Naive thymus-derived CD4-positive, alpha-beta T cell (primary cell): ENCODE measurements at regions of chr3 and their contacts with region 1.

Region 1: DNA sequence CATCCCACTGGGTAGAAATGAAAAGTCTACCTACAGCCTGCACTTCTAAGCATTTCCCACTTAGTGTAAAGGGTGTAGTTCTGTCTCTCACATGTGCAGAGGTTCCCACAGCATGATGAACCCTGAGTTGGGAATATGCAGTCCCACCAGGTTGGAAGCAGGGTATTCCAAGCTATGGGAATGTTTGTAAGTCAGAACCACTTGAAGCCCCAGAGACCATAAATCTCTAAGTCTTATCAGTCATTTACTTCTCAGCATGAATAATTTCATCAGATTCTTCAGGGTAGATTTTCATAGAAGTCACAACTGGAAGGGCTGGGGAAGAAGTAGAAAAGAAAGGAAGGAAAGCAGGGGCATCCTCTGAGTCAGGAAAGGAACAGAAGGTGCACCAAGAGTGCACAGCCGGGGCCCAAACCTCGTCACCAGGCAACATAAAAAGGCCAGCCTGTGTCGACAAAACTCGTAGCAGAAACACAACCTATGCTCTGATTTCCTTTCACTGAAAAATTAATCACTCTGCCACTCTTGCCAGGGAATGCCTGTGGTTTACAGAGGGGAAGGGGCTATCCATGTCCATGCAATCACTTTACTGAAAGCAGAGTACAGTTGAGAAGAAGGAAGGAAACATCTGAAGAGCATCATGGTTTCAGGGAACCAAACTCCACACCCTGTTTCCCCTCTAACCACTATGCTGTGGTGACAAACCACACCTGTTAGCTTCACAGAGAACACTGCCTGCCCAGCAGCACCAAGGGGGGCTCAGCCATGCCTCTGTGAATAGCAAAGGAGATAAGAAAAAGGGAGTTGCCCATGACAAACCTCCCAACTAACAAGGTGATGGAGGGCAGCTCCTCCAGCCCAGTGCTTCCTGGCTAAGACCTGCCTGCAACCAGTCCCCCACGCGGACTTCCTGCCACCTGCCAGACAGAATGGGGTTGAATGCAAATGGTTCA is 40.5 kb downstream of the SH3BP5 start:
- DNase-seq: peak in 8 of 9 donors; percentile 61 to 78 (median 68)
- ATAC-seq: peak; percentile 84
- H3K4me3 ChIP-seq: peak overlapping the region; percentile 28
- H3K4me3 Mint-ChIP-seq: peak overlapping the region; percentile 74 to 86 (median 80)
- H3K27ac ChIP-seq: peak overlapping the region; percentile 23
- H3K27ac Mint-ChIP-seq: peak overlapping the region; percentile 77 to 97 (median 94)
- H3K4me1 ChIP-seq: peaks cover 58 to 62% of the 10 kb centered on the region in 2 donors
- H3K4me1 Mint-ChIP-seq: peaks cover 64 to 96% (median 85%) of the 10 kb centered on the region in 7 donors
- H3K27me3 ChIP-seq: no peaks in the 10 kb centered on the region
- H3K27me3 Mint-ChIP-seq: no peaks in the 10 kb centered on the region

Region 2: DNA sequence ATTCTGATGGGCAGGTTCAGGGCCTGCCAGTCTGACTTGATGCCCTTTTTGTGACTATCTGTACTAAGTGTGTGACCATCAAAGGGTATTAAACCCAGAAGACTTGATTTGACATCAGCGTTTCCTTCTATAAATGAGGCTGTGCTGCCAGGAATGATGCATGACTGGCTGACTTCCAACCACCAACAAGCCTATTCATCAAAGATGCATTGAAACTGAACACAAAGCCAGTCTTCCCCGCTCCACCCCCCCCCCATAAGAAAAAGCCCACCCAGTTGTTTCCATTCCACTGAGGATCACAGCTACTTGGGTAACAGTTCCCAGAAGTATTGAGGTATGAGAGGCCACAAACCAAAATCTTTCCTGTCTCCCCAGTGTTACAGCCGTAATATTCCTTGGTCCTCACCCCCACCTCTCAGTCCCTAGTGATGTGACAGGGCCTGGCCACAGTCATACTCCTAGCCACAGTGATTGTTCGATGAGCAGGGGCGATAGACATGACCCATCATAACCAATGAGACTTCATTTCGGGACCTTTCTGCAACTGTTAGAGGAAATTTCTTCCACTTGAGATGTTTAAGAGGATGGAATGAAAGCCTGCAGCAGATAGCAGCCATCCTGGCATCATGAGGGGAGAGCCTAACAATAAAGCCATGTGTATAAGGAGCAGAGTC is 17.9 kb after region 1 on chr3:
- CTCF ChIA-PET with region 1: interaction called, 3 read pairs
- POLR2A ChIA-PET with region 1: interaction called, 5 read pairs
- intact Hi-C with region 1: loop called (anchors 1 to 2 kb)
- DNase-seq: no peak
- ATAC-seq: no peak
- H3K4me3 ChIP-seq: no peak overlapping the region
- H3K4me3 Mint-ChIP-seq: peak overlapping the region in 6 of 10 donors; percentile 17 to 69 (median 46)
- H3K27ac ChIP-seq: no peak overlapping the region
- H3K27ac Mint-ChIP-seq: peak overlapping the region in 8 of 9 donors; percentile 23 to 89 (median 66)
- H3K4me1 ChIP-seq: peaks cover 44 to 52% of the 10 kb centered on the region in 2 donors
- H3K4me1 Mint-ChIP-seq: peaks cover 36 to 72% (median 63%) of the 10 kb centered on the region in 7 donors
- H3K27me3 ChIP-seq: no peaks in the 10 kb centered on the region
- H3K27me3 Mint-ChIP-seq: no peaks in the 10 kb centered on the region

Region 3: GRCh38 chr3:15325242-15325641 is 33.4 kb after region 1 on chr3:
- CTCF ChIA-PET with region 1: no interaction called
- POLR2A ChIA-PET with region 1: interaction called, 7 read pairs
- intact Hi-C with region 1: loop called in 1 of 2 experiments (anchors 1 kb)
- DNase-seq: no peak
- ATAC-seq: no peak
- H3K4me3 ChIP-seq: no peak overlapping the region
- H3K4me3 Mint-ChIP-seq: peak overlapping the region in 3 of 10 donors; percentile 34 to 55 (median 40)
- H3K27ac ChIP-seq: no peak overlapping the region
- H3K27ac Mint-ChIP-seq: peak overlapping the region in 7 of 9 donors; percentile 41 to 87 (median 56)
- H3K4me1 ChIP-seq: peaks cover 34 to 49% of the 10 kb centered on the region in 2 donors
- H3K4me1 Mint-ChIP-seq: peaks cover 46 to 94% (median 83%) of the 10 kb centered on the region in 7 donors
- H3K27me3 ChIP-seq: no peaks in the 10 kb centered on the region
- H3K27me3 Mint-ChIP-seq: no peaks in the 10 kb centered on the region

Region 4: DNA sequence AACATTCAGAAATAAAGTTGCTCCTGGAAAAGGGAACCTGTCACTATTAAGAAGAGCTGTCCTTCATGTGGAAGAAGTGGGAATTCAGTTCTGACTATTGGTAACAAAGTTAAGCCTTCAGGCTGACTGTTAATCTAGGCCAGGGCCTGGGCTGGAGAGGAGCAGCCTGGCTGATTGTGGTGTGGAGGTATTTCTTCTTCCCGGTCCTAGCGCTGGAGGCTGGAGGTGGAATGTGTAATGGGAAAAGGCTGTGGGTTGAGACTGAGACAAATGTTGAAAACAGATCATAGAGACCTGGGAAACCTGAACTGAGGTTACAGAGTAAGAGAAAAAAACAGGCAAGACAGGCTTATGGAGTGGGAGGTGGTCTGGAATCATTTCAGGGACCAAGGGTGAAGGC is 64.3 kb after region 1 on chr3:
- CTCF ChIA-PET with region 1: interaction called, 4 read pairs
- POLR2A ChIA-PET with region 1: interaction called, 6 read pairs
- intact Hi-C with region 1: loop called in 1 of 2 experiments (anchors 1 kb)
- DNase-seq: no peak
- ATAC-seq: no peak
- H3K4me3 ChIP-seq: peak overlapping the region; percentile 40
- H3K4me3 Mint-ChIP-seq: peak overlapping the region; percentile 67 to 88 (median 76)
- H3K27ac ChIP-seq: peak overlapping the region; percentile 67
- H3K27ac Mint-ChIP-seq: peak overlapping the region; percentile 87 to 99 (median 93)
- H3K4me1 ChIP-seq: peaks cover 19 to 36% of the 10 kb centered on the region in 2 donors
- H3K4me1 Mint-ChIP-seq: peaks cover 28 to 53% (median 45%) of the 10 kb centered on the region in 7 donors
- H3K27me3 ChIP-seq: no peaks in the 10 kb centered on the region
- H3K27me3 Mint-ChIP-seq: no peaks in the 10 kb centered on the region